IMR-90 (cell line): ENCODE measurements at regions of chr2 and their contacts with region 1.

Region 1: DNA sequence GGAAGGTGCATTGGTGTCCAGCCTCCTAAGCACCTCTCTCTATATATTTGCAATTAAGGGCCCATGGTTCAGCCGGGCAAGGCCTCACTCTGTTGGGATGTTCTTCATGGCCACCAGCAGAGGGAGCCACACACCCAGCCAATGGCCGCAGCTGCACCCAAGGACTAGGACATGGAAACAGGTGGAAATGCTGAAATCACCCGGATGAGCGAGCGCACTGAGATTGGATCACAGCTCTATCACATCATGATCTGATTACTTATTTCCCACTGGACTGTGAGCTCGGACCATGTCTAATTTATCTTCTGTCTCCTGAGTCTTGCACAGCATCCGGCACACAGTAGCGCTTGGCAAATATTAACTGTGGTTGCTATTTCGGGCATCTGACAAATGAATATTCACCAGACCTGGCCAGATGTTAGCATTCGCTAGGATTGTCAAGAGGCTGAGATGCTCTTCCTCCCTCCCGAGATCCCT is 31.2 kb downstream of the KIF3C start:
- DNase-seq: peak; percentile 83
- ATAC-seq: peak; percentile 99
- H3K4me3 ChIP-seq: no peak overlapping the region
- H3K27ac ChIP-seq: no peak overlapping the region
- H3K4me1 ChIP-seq: peaks cover 2% of the 10 kb centered on the region; the same call in 1 of the 2 replicates
- H3K27me3 ChIP-seq: no peaks in the 10 kb centered on the region
- CTCF ChIP-seq: peak; percentile 96
- POLR2A ChIP-seq: 0 out of 2 replicates have a peak, but pooled peaks have one; percentile 21
- RAD21 ChIP-seq: peak; percentile 100

Region 2: GRCh38 chr2:25808006-25808383 is 143.1 kb before region 1 on chr2:
- CTCF ChIA-PET with region 1: no interaction called
- POLR2A ChIA-PET with region 1: no interaction called
- dilution Hi-C with region 1: no loop called
- in situ Hi-C with region 1: no loop called
- intact Hi-C with region 1: no loop called
- DNase-seq: peak; percentile 65
- ATAC-seq: peak; percentile 49
- H3K4me3 ChIP-seq: no peak overlapping the region
- H3K27ac ChIP-seq: no peak overlapping the region
- H3K4me1 ChIP-seq: no peaks in the 10 kb centered on the region
- H3K27me3 ChIP-seq: no peaks in the 10 kb centered on the region
- CTCF ChIP-seq: no peak
- POLR2A ChIP-seq: no peak
- RAD21 ChIP-seq: no peak

Region 3: DNA sequence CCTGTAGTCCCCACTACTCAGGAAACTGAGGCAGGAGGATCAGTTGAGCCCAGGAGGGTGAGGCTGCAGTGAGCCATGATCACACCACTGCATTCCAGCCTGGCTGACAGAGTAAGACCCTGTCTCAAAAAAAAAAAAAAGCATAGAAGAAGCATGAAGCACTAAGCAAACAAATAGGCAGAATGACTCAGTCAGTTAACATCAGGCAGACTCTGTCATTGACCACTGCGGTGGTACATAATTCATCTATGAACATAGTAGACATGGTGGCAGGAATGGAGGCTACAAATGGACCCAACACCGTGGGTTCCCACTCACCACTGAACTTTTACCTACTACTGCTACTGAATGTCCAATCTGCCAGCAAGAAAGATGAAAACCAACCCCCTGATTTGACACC is 65.2 kb before region 1 on chr2:
- CTCF ChIA-PET with region 1: no interaction called
- POLR2A ChIA-PET with region 1: interaction called, 15 read pairs
- dilution Hi-C with region 1: no loop called
- in situ Hi-C with region 1: no loop called
- intact Hi-C with region 1: no loop called
- DNase-seq: peak; percentile 95
- ATAC-seq: peak; percentile 95
- H3K4me3 ChIP-seq: no peak overlapping the region
- H3K27ac ChIP-seq: no peak overlapping the region
- H3K4me1 ChIP-seq: peaks cover 6% of the 10 kb centered on the region; the same call in 1 of the 2 replicates
- H3K27me3 ChIP-seq: no peaks in the 10 kb centered on the region
- CTCF ChIP-seq: no peak; the same call in 1 of the 2 replicates
- POLR2A ChIP-seq: no peak
- RAD21 ChIP-seq: no peak

Region 4: DNA sequence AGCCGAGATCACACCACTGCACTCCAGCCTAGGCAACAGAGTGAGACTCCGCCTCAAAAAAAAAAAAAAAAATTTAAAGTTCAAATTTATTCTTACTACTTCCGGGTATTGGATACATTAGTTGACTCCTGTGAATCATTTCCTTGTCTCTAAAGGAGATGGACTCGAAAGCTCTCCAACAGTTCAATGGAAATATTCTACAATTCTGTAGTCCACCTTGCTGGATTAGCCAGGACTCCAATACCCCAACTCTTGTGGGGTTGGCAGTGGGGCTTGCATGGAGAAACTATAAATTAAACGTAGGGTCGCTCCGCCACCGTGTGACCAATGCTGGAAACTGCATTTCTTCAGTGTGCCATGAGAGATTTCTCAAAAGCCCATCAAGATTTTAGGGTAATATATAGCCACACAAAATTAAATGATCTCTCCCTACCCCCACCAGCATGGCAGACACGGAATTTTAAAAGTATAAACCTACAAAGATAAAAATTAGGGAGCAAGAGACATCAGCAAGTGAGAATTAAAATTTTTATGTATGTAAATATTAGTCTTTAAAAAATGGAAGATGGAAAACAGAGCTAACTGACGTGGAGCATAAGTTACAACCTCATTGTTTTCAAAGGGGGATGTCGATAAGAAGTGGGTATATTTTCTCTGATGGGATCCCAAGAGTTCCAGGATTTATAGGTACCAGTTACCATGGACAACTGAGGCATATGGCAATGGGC is 194.0 kb after region 1 on chr2:
- CTCF ChIA-PET with region 1: no interaction called
- POLR2A ChIA-PET with region 1: no interaction called
- dilution Hi-C with region 1: no loop called
- in situ Hi-C with region 1: no loop called
- intact Hi-C with region 1: loop called (anchors 1 kb)
- DNase-seq: peak; percentile 55
- ATAC-seq: peak; percentile 84
- H3K4me3 ChIP-seq: no peak overlapping the region
- H3K27ac ChIP-seq: no peak overlapping the region
- H3K4me1 ChIP-seq: no peaks in the 10 kb centered on the region
- H3K27me3 ChIP-seq: peaks cover 5% of the 10 kb centered on the region
- CTCF ChIP-seq: peak; percentile 85
- POLR2A ChIP-seq: no peak
- RAD21 ChIP-seq: peak; percentile 83

Region 5: DNA sequence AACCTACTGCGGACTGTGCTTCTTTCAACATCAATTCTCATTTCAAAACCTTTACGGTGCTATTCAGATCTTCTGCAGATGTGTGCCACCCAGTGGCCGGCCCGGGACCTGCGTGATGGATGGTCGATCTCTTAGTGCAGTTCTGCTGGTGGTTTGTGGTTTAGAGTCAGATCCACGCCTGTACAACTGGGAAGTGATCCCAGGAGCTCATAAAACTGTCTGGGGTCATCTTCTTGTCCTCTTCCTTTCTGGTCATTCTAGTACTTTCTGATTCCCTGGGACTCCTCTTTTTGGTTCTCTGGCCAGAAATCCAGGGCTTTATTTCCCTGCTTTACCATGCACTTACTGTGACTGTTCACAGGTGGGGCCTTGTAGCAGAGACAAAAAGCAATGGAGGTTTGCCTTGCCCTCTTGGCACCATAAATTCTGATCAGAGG is 379.0 kb after region 1 on chr2:
- CTCF ChIA-PET with region 1: interaction called, 3 read pairs
- POLR2A ChIA-PET with region 1: no interaction called
- dilution Hi-C with region 1: no loop called
- in situ Hi-C with region 1: loop called (anchors 25 kb)
- intact Hi-C with region 1: loop called (anchors 5 kb)
- DNase-seq: peak; percentile 79
- ATAC-seq: peak; percentile 94
- H3K4me3 ChIP-seq: no peak overlapping the region
- H3K27ac ChIP-seq: no peak overlapping the region
- H3K4me1 ChIP-seq: peaks cover 6% of the 10 kb centered on the region
- H3K27me3 ChIP-seq: peaks cover 6% of the 10 kb centered on the region
- CTCF ChIP-seq: peak; percentile 80
- POLR2A ChIP-seq: no peak
- RAD21 ChIP-seq: peak; percentile 84